Head of caudate nucleus (tissue), 42 donors: ENCODE measurements at regions of chr19 and their contacts with region 1.

Region 1: GRCh38 chr19:35347171-35347929 is at the start of gene FFAR1:
- DNase-seq: peak in 14 of 42 donors; percentile 10 to 44 (median 28)

Region 2: GRCh38 chr19:35408284-35409171 is 61.2 kb after region 1 on chr19:
- intact Hi-C with region 1: no loop called
- DNase-seq: no peak

Region 3: GRCh38 chr19:35468637-35469036 is 121.3 kb after region 1 on chr19:
- intact Hi-C with region 1: loop called (anchors 10 kb)
- DNase-seq: peak in 37 of 42 donors; percentile 9 to 70 (median 48)